MCF 10A (cell line): ENCODE measurements at regions of chr20 and their contacts with region 1.

Region 1: GRCh38 chr20:50534567-50535551 is 24.7 kb downstream of the PTPN1 start:
- DNase-seq: peak; percentile 58
- H3K4me3 Mint-ChIP-seq: no peak overlapping the region
- H3K27ac Mint-ChIP-seq: peak overlapping the region; percentile 49
- H3K4me1 Mint-ChIP-seq: peaks cover 36% of the 10 kb centered on the region
- H3K27me3 Mint-ChIP-seq: no peaks in the 10 kb centered on the region
- CTCF ChIP-seq: no peak

Region 2: DNA sequence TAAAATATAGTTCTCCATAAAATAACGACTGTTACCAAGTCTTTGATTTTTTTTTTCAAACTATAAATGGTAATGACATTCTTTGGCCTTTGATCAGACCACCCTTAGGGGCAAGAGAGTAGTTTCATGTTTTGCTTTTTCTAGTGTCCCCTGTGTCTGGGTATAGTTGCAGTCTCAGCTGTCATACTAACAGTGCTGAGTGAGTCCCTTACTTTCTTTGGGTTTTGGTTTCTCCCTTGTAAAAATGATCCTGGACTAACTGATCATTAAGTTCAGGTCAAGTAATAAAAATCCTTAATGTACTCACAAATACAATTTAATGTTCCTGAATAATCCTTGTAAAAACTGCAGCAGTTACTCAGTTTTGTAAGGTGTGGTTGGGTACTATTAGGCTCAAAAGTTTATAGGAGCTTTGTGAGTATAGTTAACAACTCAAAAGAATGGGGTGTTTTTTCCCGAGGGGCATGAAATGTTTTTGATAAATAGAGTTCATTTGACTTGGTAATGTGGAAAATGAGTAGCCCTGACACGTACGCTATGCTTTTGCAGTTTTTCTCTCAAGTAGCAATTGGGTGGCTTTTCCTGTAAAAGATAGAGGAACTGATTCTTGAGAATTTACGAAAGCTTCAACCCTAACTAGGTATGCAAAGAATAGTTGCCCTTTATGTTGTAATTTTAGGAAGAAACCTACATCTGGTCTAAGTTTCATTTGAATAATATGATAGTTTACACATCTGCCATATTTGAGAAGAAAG is 18.5 kb before region 1 on chr20:
- CTCF ChIA-PET with region 1: interaction called, 4 read pairs
- POLR2A ChIA-PET with region 1: interaction called, 109 read pairs
- intact Hi-C with region 1: no loop called
- DNase-seq: no peak
- H3K4me3 Mint-ChIP-seq: no peak overlapping the region
- H3K27ac Mint-ChIP-seq: no peak overlapping the region
- H3K4me1 Mint-ChIP-seq: peaks cover 60% of the 10 kb centered on the region
- H3K27me3 Mint-ChIP-seq: no peaks in the 10 kb centered on the region
- CTCF ChIP-seq: no peak

Region 3: GRCh38 chr20:50523552-50524167 is 11.2 kb before region 1 on chr20:
- CTCF ChIA-PET with region 1: interaction called, 3 read pairs
- POLR2A ChIA-PET with region 1: interaction called, 25 read pairs
- intact Hi-C with region 1: no loop called
- DNase-seq: no peak
- H3K4me3 Mint-ChIP-seq: no peak overlapping the region
- H3K27ac Mint-ChIP-seq: no peak overlapping the region
- H3K4me1 Mint-ChIP-seq: peaks cover 28% of the 10 kb centered on the region
- H3K27me3 Mint-ChIP-seq: no peaks in the 10 kb centered on the region
- CTCF ChIP-seq: no peak